ENCODE measurements at regions of chr19 and their contacts with region 1.

Region 1: DNA sequence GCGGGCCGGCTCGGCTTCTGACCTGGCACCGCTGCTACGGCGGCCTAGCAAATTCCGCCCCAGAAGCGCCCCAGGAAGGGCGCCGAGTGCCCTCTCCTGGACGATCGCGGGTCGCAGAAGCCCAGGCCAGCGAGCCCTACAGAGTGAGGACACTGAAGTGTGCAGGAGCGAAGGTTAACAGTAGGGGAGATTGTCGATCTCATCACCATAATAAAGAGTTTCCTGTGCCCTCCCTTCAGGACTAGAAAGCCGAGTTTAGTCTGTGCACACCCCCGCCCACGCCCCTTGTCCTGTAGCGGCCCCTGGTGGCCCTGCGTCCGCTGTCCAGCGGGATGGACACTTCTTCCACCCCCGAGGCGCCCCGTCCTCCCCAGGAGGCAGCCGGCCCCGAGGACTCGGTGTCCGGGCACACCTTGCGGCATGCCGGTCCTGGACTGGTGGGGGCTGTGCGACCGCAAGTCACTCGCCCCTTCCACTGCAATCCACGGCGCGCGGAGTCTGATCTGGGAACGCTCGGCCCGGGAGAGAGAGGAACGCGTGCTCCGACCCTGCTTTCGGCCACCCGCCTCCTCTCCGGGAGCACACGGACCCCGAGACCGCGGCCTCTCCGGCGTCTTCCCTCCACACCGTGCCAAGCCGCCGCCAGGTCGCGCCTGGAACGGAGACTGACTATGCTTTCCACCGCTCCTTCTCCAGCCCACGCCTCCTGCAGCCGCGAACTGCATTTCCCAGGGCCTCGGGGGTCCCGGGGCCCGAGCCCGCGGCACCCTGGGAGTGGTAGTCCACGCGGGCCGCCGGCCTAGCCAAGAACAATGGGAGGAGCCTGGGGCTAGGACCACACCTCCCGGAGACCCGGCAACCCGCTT is 769 bp upstream of the KMT2B start:
- DNase-seq: peak; percentile 98
- H3K4me3 ChIP-seq: peak overlapping the region; percentile 76 to 99 (median 90)
- H3K27ac ChIP-seq: peak overlapping the region; percentile 90 to 97 (median 93)
- H3K4me1 ChIP-seq: peaks cover 0 to 33% (median 28%) of the 10 kb centered on the region in 4 donors
- H3K27me3 ChIP-seq: no peaks in the 10 kb centered on the region
- CTCF ChIP-seq: peak; percentile 92 to 97 (median 96)
- EP300 ChIP-seq: no peak
- POLR2A ChIP-seq: no peak

Region 2: GRCh38 chr19:35545001-35545911 is 171.8 kb before region 1 on chr19 and contains the start of gene TMEM147:
- intact Hi-C with region 1: loop called (anchors 1 kb)
- DNase-seq: peak; percentile 96
- H3K4me3 ChIP-seq: peak within 1 kb of the TSS; percentile 68 to 97 (median 90)
- H3K27ac ChIP-seq: peak within 1 kb of the TSS; percentile 79 to 90 (median 88)
- H3K4me1 ChIP-seq: peaks cover 0 to 29% (median 26%) of the 10 kb centered on the region in 4 donors
- H3K27me3 ChIP-seq: no peaks in the 10 kb centered on the region
- CTCF ChIP-seq: no peak
- EP300 ChIP-seq: peak in 1 of 4 donors; percentile 59
- POLR2A ChIP-seq: peak in 1 of 2 donors; percentile 23
- total RNA-seq, gene TMEM147: 60.1 to 72.5 (median 69.3) TPM

Region 3: GRCh38 chr19:35612559-35613321 is 104.3 kb before region 1 on chr19 and contains the start of gene HAUS5:
- intact Hi-C with region 1: no loop called
- DNase-seq: peak; percentile 96
- H3K4me3 ChIP-seq: peak within 1 kb of the TSS; percentile 49 to 79 (median 62)
- H3K27ac ChIP-seq: peak within 1 kb of the TSS; percentile 44 to 76 (median 68)
- H3K4me1 ChIP-seq: peaks cover 0 to 14% (median 10%) of the 10 kb centered on the region in 4 donors
- H3K27me3 ChIP-seq: no peaks in the 10 kb centered on the region
- CTCF ChIP-seq: no peak
- EP300 ChIP-seq: no peak
- POLR2A ChIP-seq: peak in 1 of 2 donors; percentile 11
- total RNA-seq, gene HAUS5: 4.6 to 9.6 (median 6.1) TPM

Region 4: DNA sequence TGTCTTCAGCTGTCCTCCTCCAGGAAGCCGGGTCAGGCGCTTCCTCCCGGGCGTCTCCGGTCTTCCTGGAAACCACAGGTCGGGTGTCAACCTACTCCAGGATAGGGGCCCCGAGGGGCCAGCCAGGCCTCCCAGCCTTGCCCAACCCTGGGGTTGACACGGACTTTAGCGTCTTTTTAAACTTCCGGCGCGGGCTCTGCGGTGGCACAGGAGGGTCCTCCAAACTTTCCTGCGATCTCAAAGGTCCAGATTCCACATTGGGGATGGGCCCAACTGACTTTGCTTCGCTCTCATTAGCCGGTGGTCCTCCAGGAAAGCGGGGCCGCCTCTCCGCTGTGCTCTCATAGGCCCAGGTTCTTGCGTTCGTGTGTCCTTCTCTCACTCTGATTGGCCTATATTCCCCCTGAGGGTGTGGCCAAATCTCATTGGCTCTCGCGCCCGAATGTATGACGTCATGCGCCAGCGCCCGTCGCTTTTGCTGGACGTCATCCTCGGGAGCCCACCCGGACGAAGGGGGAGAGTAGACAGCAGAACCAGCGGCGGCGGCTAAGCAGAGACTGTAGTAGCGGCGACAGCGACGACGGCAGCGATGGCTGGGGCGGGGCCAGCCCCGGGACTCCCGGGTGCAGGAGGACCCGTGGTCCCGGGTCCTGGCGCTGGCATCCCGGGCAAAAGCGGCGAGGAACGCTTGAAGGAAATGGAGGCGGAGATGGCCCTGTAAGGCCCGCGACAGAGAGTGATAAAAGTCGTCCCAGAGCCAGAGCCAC is 88.3 kb before region 1 on chr19 and contains the start of gene RBM42:
- intact Hi-C with region 1: loop called (anchors 5 kb)
- DNase-seq: peak; percentile 99
- H3K4me3 ChIP-seq: peak within 1 kb of the TSS; percentile 70 to 99 (median 86)
- H3K27ac ChIP-seq: peak within 1 kb of the TSS; percentile 90 to 98 (median 94)
- H3K4me1 ChIP-seq: peaks cover 0 to 22% (median 18%) of the 10 kb centered on the region in 4 donors
- H3K27me3 ChIP-seq: no peaks in the 10 kb centered on the region
- CTCF ChIP-seq: no peak
- EP300 ChIP-seq: peak in 2 of 4 donors; percentile 21 to 31
- POLR2A ChIP-seq: peak; percentile 55 to 66
- total RNA-seq, gene RBM42: 43.5 to 61.2 (median 53.2) TPM

Region 5: GRCh38 chr19:35673121-35673804 is 43.8 kb before region 1 on chr19:
- intact Hi-C with region 1: no loop called
- DNase-seq: peak; percentile 64
- H3K4me3 ChIP-seq: peak overlapping the region in 3 of 4 donors; percentile 28 to 35 (median 29)
- H3K27ac ChIP-seq: no peak overlapping the region
- H3K4me1 ChIP-seq: peaks cover 0 to 8% (median 3%) of the 10 kb centered on the region in 4 donors
- H3K27me3 ChIP-seq: peaks cover 5 to 43% (median 10%) of the 10 kb centered on the region in 3 donors
- CTCF ChIP-seq: no peak
- EP300 ChIP-seq: no peak
- POLR2A ChIP-seq: no peak

Region 6: DNA sequence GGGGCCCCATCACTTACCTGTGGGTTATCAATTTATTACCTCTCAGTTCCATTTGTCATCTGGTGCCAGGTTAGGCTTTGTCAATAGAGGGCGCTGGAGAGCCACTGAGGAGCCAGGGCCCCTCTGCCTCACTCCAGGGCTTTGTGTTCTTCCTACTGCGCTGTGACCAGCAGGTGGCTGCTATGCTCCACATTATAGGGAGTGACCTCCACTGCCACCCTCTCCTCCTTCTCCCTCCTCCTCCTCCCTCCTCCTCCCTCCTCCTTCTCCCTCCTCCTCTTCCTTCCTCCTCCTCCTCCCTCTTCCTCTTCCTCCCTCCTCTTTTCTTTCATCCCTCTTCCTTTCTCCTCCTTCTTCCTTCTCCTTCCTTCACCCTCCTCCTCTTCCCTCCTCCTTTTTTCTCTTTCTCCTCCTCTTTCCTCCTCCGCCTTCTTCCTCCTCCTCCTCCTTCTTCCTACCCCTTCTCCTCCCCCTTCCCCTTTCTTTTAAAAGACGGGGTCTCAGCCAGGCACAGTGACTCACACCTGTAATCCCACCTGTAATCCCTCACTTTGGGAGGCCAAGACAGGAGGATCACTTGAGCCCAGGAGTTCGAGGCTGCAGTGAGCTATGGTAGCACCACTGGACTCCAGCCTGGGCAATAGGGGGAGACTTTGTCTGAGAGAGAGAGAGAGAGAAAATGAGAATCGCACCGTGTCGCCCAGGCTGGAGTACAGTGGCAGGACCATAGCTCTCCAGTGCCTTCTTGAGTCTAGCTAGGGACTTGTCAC is 23.0 kb before region 1 on chr19:
- intact Hi-C with region 1: loop called (anchors 1 kb)
- DNase-seq: peak; percentile 93
- H3K4me3 ChIP-seq: no peak overlapping the region
- H3K27ac ChIP-seq: no peak overlapping the region
- H3K4me1 ChIP-seq: no peaks in the 10 kb centered on the region
- H3K27me3 ChIP-seq: no peaks in the 10 kb centered on the region
- CTCF ChIP-seq: peak; percentile 96 to 99 (median 97)
- EP300 ChIP-seq: no peak
- POLR2A ChIP-seq: no peak

Region 7: DNA sequence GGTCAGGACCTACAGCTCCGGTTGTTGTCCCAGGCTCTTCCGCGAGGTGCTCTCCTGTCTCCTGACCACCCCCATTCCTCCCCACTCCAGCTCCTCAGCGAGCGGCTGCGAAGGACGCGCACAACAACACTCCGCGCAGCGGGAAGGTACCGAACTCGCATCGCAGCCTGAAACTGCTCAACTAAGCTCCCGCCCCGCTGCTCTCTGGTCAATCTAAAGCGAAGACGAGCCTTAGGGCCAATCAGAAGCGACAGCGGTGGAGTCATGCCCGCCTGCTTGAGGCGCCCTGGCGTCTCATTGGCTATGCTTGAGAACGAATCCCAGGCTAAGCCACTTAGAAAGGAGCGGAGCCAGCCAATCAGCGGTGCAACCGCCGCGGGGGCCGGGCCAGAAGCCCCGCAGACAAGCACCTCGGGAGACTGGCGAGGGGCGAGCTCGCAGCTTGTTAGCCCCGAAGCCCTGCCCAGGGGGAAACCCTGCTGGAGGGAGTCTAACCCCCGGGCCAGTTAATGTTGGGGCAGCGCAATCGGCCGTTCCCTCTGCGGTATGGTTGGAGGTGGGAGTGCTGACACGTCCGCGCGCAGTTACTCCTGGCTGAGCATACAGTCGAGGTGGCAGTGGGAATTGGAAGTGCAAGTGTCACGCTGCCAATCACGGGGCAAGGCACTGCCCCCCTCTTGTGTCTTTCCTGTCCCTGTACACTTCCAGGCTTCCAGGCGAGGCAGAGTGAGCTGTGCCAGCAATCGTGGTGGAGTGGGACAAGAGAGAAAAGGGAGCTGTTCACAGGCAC is 14.6 kb before region 1 on chr19:
- intact Hi-C with region 1: loop called (anchors 2 kb)
- DNase-seq: peak; percentile 98
- H3K4me3 ChIP-seq: peak overlapping the region; percentile 48 to 64 (median 53)
- H3K27ac ChIP-seq: peak overlapping the region in 3 of 4 donors; percentile 34 to 59 (median 44)
- H3K4me1 ChIP-seq: peaks cover 0 to 12% (median 12%) of the 10 kb centered on the region in 4 donors
- H3K27me3 ChIP-seq: peaks cover 0 to 20% (median 0%) of the 10 kb centered on the region in 3 donors
- CTCF ChIP-seq: no peak
- EP300 ChIP-seq: no peak
- POLR2A ChIP-seq: no peak

Region 8: GRCh38 chr19:35740423-35741202 is 23.6 kb after region 1 on chr19:
- intact Hi-C with region 1: loop called (anchors 2 kb)
- DNase-seq: peak; percentile 99
- H3K4me3 ChIP-seq: peak overlapping the region; percentile 38 to 69 (median 51)
- H3K27ac ChIP-seq: peak overlapping the region; percentile 84 to 91 (median 87)
- H3K4me1 ChIP-seq: peaks cover 0 to 38% (median 30%) of the 10 kb centered on the region in 4 donors
- H3K27me3 ChIP-seq: no peaks in the 10 kb centered on the region
- CTCF ChIP-seq: peak in 2 of 4 experiments; percentile 17 to 26
- EP300 ChIP-seq: peak in 1 of 4 donors; percentile 76
- POLR2A ChIP-seq: no peak

Region 9: GRCh38 chr19:35757749-35758608 is 40.9 kb after region 1 on chr19 and contains the start of gene PROSER3:
- intact Hi-C with region 1: loop called (anchors 1 kb)
- DNase-seq: peak; percentile 100
- H3K4me3 ChIP-seq: peak within 1 kb of the TSS; percentile 79 to 86 (median 83)
- H3K27ac ChIP-seq: peak within 1 kb of the TSS; percentile 98 to 99 (median 99)
- H3K4me1 ChIP-seq: peaks cover 0 to 63% (median 49%) of the 10 kb centered on the region in 4 donors
- H3K27me3 ChIP-seq: no peaks in the 10 kb centered on the region
- CTCF ChIP-seq: no peak
- EP300 ChIP-seq: no peak
- POLR2A ChIP-seq: peak; percentile 72 to 83
- total RNA-seq, gene PROSER3: 2.9 to 6.1 (median 5.2) TPM

Region 10: DNA sequence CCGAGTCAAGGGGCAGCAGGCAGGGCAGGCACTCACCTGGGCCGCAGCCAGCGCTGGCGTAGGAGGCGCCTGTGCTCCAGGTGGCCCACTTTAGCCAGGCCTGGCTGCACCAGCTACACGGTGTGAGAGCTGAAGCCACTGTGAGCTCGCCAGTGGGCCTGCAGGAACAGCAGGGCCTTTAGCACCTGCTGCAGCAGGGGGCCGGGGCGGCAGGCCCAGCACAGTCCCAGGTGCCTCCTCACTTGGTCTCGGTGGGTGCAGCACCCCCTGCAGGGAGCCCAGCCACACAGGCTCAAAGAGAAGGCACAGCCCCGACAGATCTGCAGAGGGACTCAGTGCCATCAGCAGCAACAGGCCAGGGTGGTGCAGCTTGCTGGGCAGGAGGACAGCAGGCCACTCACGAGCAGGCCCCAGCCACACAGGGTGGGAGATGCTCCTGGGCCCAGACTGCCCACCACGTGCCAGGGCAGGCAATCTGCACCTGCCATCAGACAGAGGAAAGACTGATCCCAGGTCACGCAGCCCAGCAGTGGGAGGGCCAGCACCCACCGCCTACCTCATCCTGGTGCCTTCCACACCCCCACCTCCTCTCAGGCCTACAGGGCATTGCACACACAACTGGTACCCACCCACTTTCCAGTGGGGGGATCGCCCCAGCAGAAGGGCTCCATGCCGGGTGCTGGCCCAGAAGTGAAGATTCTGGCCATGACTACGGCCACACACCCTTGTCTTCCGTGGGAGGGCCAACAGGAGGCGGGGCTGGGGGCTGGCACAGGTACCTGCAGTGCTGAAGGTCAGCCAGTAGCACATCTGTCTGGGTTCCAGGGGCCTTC is 74.2 kb after region 1 on chr19:
- intact Hi-C with region 1: no loop called
- DNase-seq: peak; percentile 61
- H3K4me3 ChIP-seq: no peak overlapping the region
- H3K27ac ChIP-seq: no peak overlapping the region
- H3K4me1 ChIP-seq: no peaks in the 10 kb centered on the region
- H3K27me3 ChIP-seq: peaks cover 0 to 11% (median 5%) of the 10 kb centered on the region in 3 donors
- CTCF ChIP-seq: no peak
- EP300 ChIP-seq: no peak
- POLR2A ChIP-seq: no peak

Region 11: DNA sequence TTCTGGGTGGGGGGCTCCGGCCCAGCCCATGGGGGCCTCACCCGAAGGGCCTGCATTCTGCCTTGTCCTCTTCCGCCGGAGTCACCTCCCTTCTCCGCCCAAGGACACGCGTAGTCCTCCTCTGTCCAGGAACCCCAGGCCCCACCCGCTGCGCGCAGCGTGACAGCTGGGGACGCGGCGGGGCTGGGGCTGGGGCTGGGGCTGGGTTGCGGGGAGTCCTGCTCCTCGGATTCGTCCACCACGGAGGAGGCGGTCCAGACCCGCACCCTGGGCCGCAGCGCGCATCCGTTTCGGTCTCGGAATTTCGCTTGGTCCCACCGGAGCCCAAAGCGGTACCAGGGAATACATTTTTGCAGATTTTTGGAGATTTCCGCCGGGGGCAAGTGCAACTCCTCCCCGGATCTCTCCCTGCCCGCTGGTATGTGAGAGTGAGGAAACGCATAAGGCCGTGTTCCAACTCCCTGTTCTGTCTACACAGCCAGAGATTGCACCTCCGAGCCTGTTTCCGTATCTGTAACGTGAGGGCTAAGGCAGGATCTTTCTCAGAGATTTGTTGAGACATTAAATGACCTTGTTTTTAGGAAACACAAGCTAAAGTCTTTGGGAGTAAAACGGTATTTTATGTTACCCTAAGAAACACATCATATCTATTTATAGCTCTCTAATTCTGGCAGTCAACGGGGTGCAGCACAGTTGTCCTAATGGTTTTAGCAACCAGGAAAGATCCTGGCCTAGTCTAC is 435.5 kb after region 1 on chr19 and contains the start of gene COX7A1:
- intact Hi-C with region 1: no loop called
- DNase-seq: peak; percentile 92
- H3K4me3 ChIP-seq: peak within 1 kb of the TSS; percentile 41 to 79 (median 58)
- H3K27ac ChIP-seq: peak within 1 kb of the TSS; percentile 91 to 99 (median 93)
- H3K4me1 ChIP-seq: peaks cover 0 to 31% (median 20%) of the 10 kb centered on the region in 4 donors
- H3K27me3 ChIP-seq: no peaks in the 10 kb centered on the region
- CTCF ChIP-seq: no peak
- EP300 ChIP-seq: no peak
- POLR2A ChIP-seq: peak in 1 of 2 donors; percentile 66
- total RNA-seq, gene COX7A1: 43.0 to 88.5 (median 72.4) TPM

Measured in sigmoid colon (tissue), 7 donors.